ENCODE measurements at regions of chr21 and their contacts with region 1.

Region 1: DNA sequence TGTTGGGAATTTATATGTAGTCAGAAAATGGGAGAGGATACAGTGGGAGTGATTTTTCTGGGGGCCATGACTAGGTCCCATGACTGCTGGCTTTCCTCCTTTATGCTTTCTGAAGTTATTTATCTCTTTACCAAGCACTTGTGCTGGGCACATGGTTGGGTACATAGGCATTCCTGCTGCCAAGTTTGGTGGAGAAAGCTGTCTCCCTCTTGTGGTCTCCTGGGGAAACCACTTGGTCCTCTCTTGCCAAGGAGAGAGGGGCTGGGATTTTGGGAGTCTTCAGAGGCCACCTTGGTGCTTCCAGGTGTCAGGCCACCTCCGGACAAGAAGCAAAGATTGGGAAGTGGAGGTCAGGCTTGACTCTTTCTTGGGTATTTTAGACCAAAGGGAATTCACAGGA is 120.2 kb upstream of the KCNE2 start:
- DNase-seq: peak; percentile 19
- ATAC-seq: peak; percentile 86
- H3K4me3 ChIP-seq: no peak overlapping the region
- H3K27ac ChIP-seq: no peak overlapping the region
- H3K4me1 ChIP-seq: no peaks in the 10 kb centered on the region
- H3K27me3 ChIP-seq: no peaks in the 10 kb centered on the region
- CTCF ChIP-seq: peak; percentile 46 to 85 (median 70); a peak in 5 of 6 replicates
- POLR2A ChIP-seq: no peak
- RAD21 ChIP-seq: peak; percentile 69

Region 2: DNA sequence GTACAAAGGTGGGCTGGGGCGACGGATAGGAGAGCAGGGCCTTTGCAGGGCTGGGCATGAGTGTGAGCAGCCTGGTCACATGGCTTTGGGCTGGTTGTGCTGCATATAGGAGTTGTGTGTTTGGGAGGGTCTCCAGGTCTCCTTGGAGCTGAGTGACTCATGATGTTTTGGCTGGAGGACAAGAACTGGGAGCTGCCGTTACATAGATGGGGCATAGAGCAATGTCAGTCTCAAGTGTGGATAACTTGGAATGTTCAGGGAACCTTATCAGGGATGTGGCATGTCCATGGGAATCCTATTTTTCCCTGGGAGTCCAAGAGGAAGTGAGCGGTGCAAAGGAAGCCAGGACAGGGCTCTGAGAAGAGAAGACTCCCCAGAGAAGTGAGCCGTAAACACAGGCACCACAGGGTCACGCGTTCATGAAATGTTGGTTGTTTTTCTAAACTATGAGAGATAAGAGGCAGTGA is 16.1 kb before region 1 on chr21:
- CTCF ChIA-PET with region 1: no interaction called
- POLR2A ChIA-PET with region 1: no interaction called
- RAD21 ChIA-PET with region 1: no interaction called
- intact Hi-C with region 1: no loop called
- DNase-seq: no peak
- ATAC-seq: no peak
- H3K4me3 ChIP-seq: no peak overlapping the region
- H3K27ac ChIP-seq: no peak overlapping the region
- H3K4me1 ChIP-seq: no peaks in the 10 kb centered on the region
- H3K27me3 ChIP-seq: no peaks in the 10 kb centered on the region
- CTCF ChIP-seq: no peak
- POLR2A ChIP-seq: no peak
- RAD21 ChIP-seq: no peak

Region 3: GRCh38 chr21:34351786-34352241 is 108.3 kb after region 1 on chr21:
- CTCF ChIA-PET with region 1: no interaction called
- POLR2A ChIA-PET with region 1: no interaction called
- RAD21 ChIA-PET with region 1: no interaction called
- intact Hi-C with region 1: loop called (anchors 1 kb)
- DNase-seq: peak; percentile 48
- ATAC-seq: peak; percentile 92
- H3K4me3 ChIP-seq: no peak overlapping the region
- H3K27ac ChIP-seq: no peak overlapping the region
- H3K4me1 ChIP-seq: peaks cover 0 to 4% of the 10 kb centered on the region in 2 experiments; a peak in 1 of 4 replicates
- H3K27me3 ChIP-seq: no peaks in the 10 kb centered on the region
- CTCF ChIP-seq: peak; percentile 63 to 70 (median 68); a peak in 5 of 6 replicates
- POLR2A ChIP-seq: no peak
- RAD21 ChIP-seq: peak; percentile 80